Transverse colon (tissue), 4 donors: ENCODE measurements at regions of chr3 and their contacts with region 1.

Region 1: GRCh38 chr3:127192576-127193232 is at the start of gene PRR23E:
- DNase-seq: no peak
- H3K4me3 ChIP-seq: no peak within 1 kb of the TSS
- H3K27ac ChIP-seq: no peak within 1 kb of the TSS
- H3K4me1 ChIP-seq: no peaks in the 10 kb centered on the region
- H3K27me3 ChIP-seq: peaks cover 6% of the 10 kb centered on the region
- CTCF ChIP-seq: no peak
- EP300 ChIP-seq: no peak
- POLR2A ChIP-seq: no peak
- total RNA-seq, gene PRR23E: not detected

Region 2: DNA sequence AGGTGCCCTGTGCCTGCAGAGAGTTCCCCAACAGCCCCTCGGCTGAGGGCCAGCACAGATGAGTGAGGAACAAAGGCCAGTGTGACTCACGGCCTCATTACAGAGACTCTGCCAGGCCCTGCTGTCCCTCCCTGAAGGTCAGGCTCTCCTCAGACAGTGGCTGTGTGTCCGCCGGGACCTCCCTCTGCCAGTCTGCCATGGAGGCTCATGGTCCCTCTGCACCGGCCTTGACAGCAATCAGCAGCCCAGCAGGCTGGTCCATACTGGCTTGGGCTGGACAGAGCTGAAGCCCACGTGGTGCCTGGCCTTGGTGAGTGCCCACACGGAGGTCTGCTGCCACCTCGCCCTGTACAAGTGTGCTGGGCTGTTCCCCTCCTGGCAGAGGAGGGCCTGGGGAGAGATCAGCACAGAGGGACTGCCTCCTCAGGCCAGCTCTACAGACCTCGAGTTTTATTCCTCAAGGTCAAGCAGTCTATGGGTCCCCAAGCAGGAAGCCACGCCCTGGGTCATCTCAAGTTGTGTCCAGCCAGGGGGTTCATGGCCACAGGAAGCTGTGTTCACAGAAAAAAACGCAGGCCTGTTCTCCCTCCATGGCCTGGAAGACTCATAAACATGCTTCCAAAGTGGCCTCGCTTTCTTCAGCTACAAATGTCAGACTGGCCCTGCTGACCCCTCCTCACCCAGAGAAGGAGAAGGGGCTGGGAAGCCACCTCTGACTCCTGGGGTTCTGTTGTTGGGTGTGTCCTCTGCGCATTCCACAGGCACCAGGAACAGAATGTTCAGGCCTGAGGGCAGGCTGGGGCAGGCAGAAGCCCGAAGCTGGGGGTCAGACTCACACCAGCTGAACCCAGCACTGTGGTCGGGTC is 1135.8 kb before region 1 on chr3:
- in situ Hi-C with region 1: no loop called
- intact Hi-C with region 1: no loop called
- DNase-seq: no peak
- H3K4me3 ChIP-seq: no peak overlapping the region
- H3K27ac ChIP-seq: no peak overlapping the region
- H3K4me1 ChIP-seq: no peaks in the 10 kb centered on the region
- H3K27me3 ChIP-seq: no peaks in the 10 kb centered on the region
- CTCF ChIP-seq: no peak
- EP300 ChIP-seq: no peak
- POLR2A ChIP-seq: no peak

Region 3: GRCh38 chr3:127172781-127173515 is 19.8 kb before region 1 on chr3:
- in situ Hi-C with region 1: no loop called
- intact Hi-C with region 1: no loop called
- DNase-seq: no peak
- H3K4me3 ChIP-seq: no peak overlapping the region
- H3K27ac ChIP-seq: no peak overlapping the region
- H3K4me1 ChIP-seq: no peaks in the 10 kb centered on the region
- H3K27me3 ChIP-seq: peaks cover 19% of the 10 kb centered on the region
- CTCF ChIP-seq: no peak
- EP300 ChIP-seq: no peak
- POLR2A ChIP-seq: no peak

Region 4: GRCh38 chr3:127214975-127215374 is 22.3 kb after region 1 on chr3:
- in situ Hi-C with region 1: no loop called
- intact Hi-C with region 1: loop called (anchors 1 kb)
- DNase-seq: no peak
- H3K4me3 ChIP-seq: no peak overlapping the region
- H3K27ac ChIP-seq: no peak overlapping the region
- H3K4me1 ChIP-seq: no peaks in the 10 kb centered on the region
- H3K27me3 ChIP-seq: peaks cover 37% of the 10 kb centered on the region
- CTCF ChIP-seq: no peak
- EP300 ChIP-seq: no peak
- POLR2A ChIP-seq: no peak